K562 (cell line): ENCODE measurements at regions of chr17 and their contacts with region 1.

Region 1: GRCh38 chr17:49997791-49998703 is 3.0 kb upstream of the DLX3 start:
- DNase-seq: peak; percentile 86 to 92 (median 88)
- ATAC-seq: peak; percentile 99
- H3K4me3 ChIP-seq: no peak overlapping the region
- H3K27ac ChIP-seq: no peak overlapping the region
- H3K4me1 ChIP-seq: peaks cover 0 to 25% of the 10 kb centered on the region in 2 experiments; a peak in 2 of 5 replicates
- H3K27me3 ChIP-seq: peaks cover 24 to 43% of the 10 kb centered on the region in 2 experiments; a peak in 4 of 5 replicates
- CTCF ChIP-seq: peak; percentile 92 to 96 (median 93)
- EP300 ChIP-seq: no peak
- POLR2A ChIP-seq: no peak
- RAD21 ChIP-seq: peak; percentile 85 to 92

Region 2: GRCh38 chr17:49556223-49556971 is 441.6 kb before region 1 on chr17:
- CTCF ChIA-PET with region 1: interaction called, 10 read pairs
- POLR2A ChIA-PET with region 1: no interaction called
- in situ Hi-C with region 1: no loop called
- intact Hi-C with region 1: no loop called
- DNase-seq: peak; percentile 83 to 91 (median 90)
- ATAC-seq: peak; percentile 99
- H3K4me3 ChIP-seq: no peak overlapping the region
- H3K27ac ChIP-seq: no peak overlapping the region
- H3K4me1 ChIP-seq: peaks cover 0 to 14% of the 10 kb centered on the region in 2 experiments; a peak in 3 of 5 replicates
- H3K27me3 ChIP-seq: peaks cover 0 to 6% of the 10 kb centered on the region in 2 experiments; a peak in 2 of 5 replicates
- CTCF ChIP-seq: peak; percentile 96 to 97 (median 96)
- EP300 ChIP-seq: no peak
- POLR2A ChIP-seq: no peak
- RAD21 ChIP-seq: peak; percentile 83 to 97

Region 3: GRCh38 chr17:49575579-49576087 is 422.4 kb before region 1 on chr17 and contains the start of gene NXPH3:
- CTCF ChIA-PET with region 1: interaction called, 8 read pairs
- POLR2A ChIA-PET with region 1: no interaction called
- in situ Hi-C with region 1: loop called (anchors 5 kb)
- intact Hi-C with region 1: loop called (anchors 1 kb)
- DNase-seq: peak; percentile 83 to 87 (median 86)
- ATAC-seq: peak; percentile 89
- H3K4me3 ChIP-seq: peak within 1 kb of the TSS; percentile 54
- H3K27ac ChIP-seq: no peak within 1 kb of the TSS
- H3K4me1 ChIP-seq: peaks cover 8 to 55% of the 10 kb centered on the region in 2 experiments; a peak in 4 of 5 replicates
- H3K27me3 ChIP-seq: peaks cover 12 to 29% of the 10 kb centered on the region in 2 experiments; a peak in 4 of 5 replicates
- CTCF ChIP-seq: peak in 2 of 3 experiments; percentile 67 to 80; a peak in 5 of 6 replicates
- EP300 ChIP-seq: no peak
- POLR2A ChIP-seq: no peak
- RAD21 ChIP-seq: peak; percentile 38 to 77; a peak in 3 of 4 replicates
- polyA plus RNA-seq, gene NXPH3: not detected

Region 4: GRCh38 chr17:49707608-49708514 is 290.2 kb before region 1 on chr17 and contains the start of gene SLC35B1:
- CTCF ChIA-PET with region 1: no interaction called
- POLR2A ChIA-PET with region 1: no interaction called
- in situ Hi-C with region 1: loop called (anchors 5 kb)
- intact Hi-C with region 1: no loop called
- DNase-seq: peak; percentile 96 to 99 (median 98)
- ATAC-seq: peak; percentile 96
- H3K4me3 ChIP-seq: peak within 1 kb of the TSS; percentile 85
- H3K27ac ChIP-seq: peak within 1 kb of the TSS; percentile 98
- H3K4me1 ChIP-seq: peaks cover 6 to 18% of the 10 kb centered on the region in 2 experiments; a peak in 4 of 5 replicates
- H3K27me3 ChIP-seq: no peaks in the 10 kb centered on the region
- CTCF ChIP-seq: peak; percentile 96 to 99 (median 96)
- EP300 ChIP-seq: no peak
- POLR2A ChIP-seq: peak; percentile 84
- RAD21 ChIP-seq: peak; percentile 77 to 81
- polyA plus RNA-seq, gene SLC35B1: 62.0 to 64.4 TPM

Region 5: GRCh38 chr17:49880291-49881053 is 117.6 kb before region 1 on chr17:
- CTCF ChIA-PET with region 1: interaction called, 24 read pairs
- POLR2A ChIA-PET with region 1: no interaction called
- in situ Hi-C with region 1: no loop called
- intact Hi-C with region 1: loop called (anchors 1 kb)
- DNase-seq: peak; percentile 83 to 96 (median 94)
- ATAC-seq: peak; percentile 99
- H3K4me3 ChIP-seq: no peak overlapping the region
- H3K27ac ChIP-seq: no peak overlapping the region
- H3K4me1 ChIP-seq: peaks cover 13 to 20% of the 10 kb centered on the region in 2 experiments
- H3K27me3 ChIP-seq: peaks cover 8 to 50% of the 10 kb centered on the region in 2 experiments; a peak in 4 of 5 replicates
- CTCF ChIP-seq: peak; percentile 93 to 94 (median 94)
- EP300 ChIP-seq: no peak
- POLR2A ChIP-seq: no peak
- RAD21 ChIP-seq: peak; percentile 73 to 89

Region 6: GRCh38 chr17:49952209-49952911 is 45.7 kb before region 1 on chr17:
- CTCF ChIA-PET with region 1: interaction called, 9 read pairs
- POLR2A ChIA-PET with region 1: interaction called, 3 read pairs
- in situ Hi-C with region 1: no loop called
- intact Hi-C with region 1: loop called (anchors 2 kb)
- DNase-seq: peak; percentile 78 to 82 (median 82)
- ATAC-seq: peak; percentile 99
- H3K4me3 ChIP-seq: no peak overlapping the region
- H3K27ac ChIP-seq: no peak overlapping the region
- H3K4me1 ChIP-seq: no peaks in the 10 kb centered on the region
- H3K27me3 ChIP-seq: peaks cover 14 to 67% of the 10 kb centered on the region in 2 experiments; a peak in 4 of 5 replicates
- CTCF ChIP-seq: peak; percentile 85 to 95 (median 88)
- EP300 ChIP-seq: no peak
- POLR2A ChIP-seq: no peak
- RAD21 ChIP-seq: peak; percentile 43 to 67

Region 7: DNA sequence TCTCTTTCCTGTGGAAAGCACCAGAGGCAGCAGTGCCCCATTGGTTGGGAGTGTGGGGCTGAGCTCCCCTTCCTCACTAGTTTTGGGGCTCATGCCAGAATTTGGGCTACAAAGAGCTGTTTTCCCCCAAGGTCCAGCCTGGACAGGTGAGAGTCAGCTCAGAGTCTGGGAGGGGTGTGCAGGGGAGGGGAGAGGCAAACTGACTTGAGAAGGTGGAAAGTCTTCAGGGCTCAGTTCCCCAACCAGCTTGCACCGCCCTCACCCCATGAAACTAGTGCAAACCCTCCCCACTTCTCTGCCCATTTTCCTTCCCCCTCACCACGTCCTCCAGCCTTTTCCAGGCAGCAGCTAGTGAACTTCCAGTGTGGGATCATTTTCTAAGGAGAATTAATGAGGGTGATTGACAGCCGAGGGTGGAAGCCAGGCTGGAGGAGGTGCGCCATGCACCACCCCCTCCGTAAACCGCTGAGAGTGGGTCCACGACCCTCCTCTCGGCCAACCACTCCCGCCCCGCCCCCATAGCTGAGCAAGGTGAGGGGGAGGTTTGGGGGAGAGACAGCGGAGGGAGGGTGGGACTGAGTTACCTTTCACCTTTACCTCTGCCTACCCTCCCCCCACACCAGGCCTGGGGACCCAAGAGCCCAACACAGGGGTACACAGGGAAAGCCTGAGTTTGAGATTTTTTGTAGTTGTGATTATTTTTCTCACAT is 35.3 kb before region 1 on chr17:
- CTCF ChIA-PET with region 1: no interaction called
- POLR2A ChIA-PET with region 1: no interaction called
- in situ Hi-C with region 1: no loop called
- intact Hi-C with region 1: no loop called
- DNase-seq: no peak
- ATAC-seq: no peak
- H3K4me3 ChIP-seq: no peak overlapping the region
- H3K27ac ChIP-seq: no peak overlapping the region
- H3K4me1 ChIP-seq: peaks cover 0 to 4% of the 10 kb centered on the region in 2 experiments; a peak in 2 of 5 replicates
- H3K27me3 ChIP-seq: peaks cover 35 to 65% of the 10 kb centered on the region in 2 experiments
- CTCF ChIP-seq: no peak
- EP300 ChIP-seq: no peak
- POLR2A ChIP-seq: no peak
- RAD21 ChIP-seq: no peak